ENCODE measurements at regions of chr13 and their contacts with region 1.

Region 1: DNA sequence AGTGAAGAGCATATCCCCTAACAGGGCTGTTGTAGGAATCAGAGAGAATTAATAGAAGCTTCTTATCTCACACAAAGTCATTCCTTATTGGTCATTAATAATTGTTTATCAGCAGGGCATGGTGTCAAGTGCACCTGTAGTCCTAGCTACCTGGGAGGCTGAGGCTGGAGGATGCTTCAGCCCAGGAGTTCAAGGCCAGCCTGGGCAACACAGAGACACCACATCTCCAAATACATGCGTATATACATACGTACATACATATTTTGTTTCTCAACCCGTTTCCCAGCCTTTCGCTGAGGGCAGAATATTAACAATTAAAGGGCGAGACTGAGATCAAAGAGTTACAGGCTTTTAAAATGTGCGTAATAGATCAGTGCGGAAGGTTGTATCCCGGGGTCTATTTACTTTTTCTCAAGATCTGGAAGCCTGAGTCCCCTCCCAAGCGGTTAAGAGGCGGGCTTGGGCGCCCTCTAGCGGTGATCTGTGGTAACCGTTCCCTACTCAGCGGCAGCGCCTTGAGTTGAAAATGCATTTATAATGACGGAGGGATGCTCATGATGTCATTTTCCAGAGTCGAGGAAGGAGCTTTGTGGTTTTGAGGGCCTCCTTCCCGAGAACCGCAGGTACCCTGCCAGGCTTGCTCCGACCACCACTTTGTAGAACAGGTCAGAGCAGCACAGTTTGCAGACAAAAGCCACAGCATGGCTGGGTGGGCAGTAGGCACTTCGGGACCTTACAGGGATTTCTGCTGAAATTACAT is 169.6 kb upstream of the GPR12 start:
- DNase-seq: peak; percentile 80
- ATAC-seq: peak; percentile 74

Region 2: DNA sequence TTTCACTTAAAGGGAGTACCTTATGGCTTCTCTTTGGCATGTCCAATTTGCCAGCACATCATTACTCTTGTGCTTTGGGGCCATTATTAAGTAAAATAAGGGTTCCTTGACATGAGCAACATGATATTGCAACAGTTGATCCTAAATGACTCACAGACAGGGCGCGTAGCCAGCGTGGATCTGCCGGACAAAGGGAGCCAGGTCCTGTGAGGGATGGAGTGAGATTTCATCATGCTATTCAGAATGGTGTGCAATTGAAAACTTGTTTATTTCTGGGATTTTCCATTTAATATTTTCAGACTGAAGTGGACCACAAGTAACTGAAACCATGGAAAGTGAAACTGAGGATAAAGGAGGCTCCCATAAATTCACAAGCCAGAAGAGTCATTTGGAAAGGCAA is 421.3 kb before region 1 on chr13:
- intact Hi-C with region 1: loop called (anchors 5 kb)
- DNase-seq: peak; percentile 89
- ATAC-seq: peak; percentile 94

Region 3: DNA sequence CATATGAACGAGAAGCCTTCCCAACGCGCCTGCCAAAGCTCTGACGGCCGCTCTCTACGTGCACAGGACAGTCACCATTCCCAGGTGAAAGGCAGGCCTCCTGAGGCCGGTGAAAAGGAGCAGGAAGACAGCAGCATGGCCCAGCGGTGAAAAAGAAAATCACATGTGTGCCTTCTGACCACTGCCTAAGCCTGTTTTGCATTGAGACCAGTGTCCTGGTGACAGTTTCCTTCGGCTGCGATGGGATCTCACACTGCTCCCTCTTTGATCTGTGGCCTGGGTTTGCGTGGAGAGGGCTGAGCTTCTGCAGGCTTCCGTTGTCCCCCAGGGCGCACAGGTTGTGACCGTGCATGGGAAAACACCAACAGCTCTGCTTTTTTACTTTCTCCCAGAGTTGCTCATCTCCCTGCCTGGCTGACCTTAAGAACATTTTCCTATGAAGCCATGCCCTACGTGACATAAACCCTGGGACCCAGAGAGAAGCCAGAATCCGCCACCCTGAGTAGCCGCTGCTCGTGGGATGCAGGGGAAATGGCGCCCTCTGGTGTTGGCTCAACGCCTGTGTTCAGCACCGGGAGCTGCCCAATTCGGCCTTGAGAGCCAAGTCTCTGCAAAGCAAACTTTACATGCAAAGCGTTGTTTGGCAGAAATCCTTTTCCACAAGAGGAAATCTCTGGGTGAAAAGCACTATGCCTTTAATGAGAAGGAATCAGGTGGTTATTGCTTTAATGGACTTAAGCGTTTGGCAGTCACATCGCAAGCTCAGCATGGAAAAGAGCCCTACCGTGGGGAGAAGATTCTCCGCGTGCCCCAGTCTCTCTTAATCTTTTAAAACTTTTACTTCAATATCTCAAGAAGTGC is 57.4 kb before region 1 on chr13:
- intact Hi-C with region 1: no loop called
- DNase-seq: peak; percentile 70
- ATAC-seq: peak; percentile 58

Region 4: GRCh38 chr13:27302643-27303262 is 372.6 kb after region 1 on chr13:
- intact Hi-C with region 1: no loop called
- DNase-seq: no peak
- ATAC-seq: no peak

Measured in left ventricle myocardium superior (tissue), 1 donor.